ENCODE measurements at regions of chr2 and their contacts with region 1.

Region 1: DNA sequence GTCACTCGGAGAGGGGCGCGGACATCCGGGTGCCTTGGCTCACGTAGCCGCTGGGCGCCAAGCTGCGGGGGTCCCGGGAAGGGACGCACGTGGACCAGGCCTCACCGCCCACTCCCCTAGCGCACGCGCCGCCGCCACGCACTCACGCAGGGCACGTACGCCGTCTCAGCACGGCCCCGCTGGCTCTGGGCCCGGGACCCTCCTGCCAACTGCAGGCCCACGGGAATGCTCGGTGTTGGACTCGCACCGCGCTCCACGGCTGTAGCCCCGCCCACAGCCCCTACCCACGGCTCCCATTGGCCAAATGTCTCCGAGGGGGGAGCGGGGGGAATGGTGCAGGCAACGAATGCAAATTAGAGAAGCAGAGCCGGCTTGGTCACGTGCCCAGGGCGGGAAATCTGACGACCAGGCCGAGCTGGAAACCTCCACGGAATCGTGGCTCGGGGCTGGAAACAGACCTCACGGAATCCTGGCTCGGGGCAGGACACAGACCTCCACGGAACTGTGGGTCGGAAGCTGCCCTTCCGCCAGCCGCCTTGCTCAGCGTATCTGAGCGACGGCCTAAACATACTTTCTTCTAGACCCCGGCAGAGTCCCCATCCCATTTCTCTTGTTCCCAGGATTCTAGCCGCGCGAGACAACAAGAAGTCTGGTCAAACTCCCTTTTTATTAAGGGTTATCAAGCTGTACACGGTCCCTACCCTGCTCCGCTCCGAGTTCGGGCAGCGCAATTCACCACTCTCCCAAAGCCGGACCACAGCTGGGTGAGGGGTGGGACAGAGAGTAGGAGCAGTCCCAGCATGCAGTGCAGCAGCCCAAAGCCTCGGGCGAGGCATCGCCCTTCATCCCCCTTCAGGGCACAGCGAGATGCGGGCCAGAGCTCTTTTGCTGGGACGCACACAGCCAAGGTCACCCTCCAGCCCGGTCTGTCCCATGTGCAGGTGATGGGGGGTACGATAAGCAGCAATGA is at the start of gene ABCB6:
- DNase-seq: peak; percentile 99
- ATAC-seq: peak; percentile 96
- total RNA-seq, gene ABCB6: 32.6 TPM

Region 2: DNA sequence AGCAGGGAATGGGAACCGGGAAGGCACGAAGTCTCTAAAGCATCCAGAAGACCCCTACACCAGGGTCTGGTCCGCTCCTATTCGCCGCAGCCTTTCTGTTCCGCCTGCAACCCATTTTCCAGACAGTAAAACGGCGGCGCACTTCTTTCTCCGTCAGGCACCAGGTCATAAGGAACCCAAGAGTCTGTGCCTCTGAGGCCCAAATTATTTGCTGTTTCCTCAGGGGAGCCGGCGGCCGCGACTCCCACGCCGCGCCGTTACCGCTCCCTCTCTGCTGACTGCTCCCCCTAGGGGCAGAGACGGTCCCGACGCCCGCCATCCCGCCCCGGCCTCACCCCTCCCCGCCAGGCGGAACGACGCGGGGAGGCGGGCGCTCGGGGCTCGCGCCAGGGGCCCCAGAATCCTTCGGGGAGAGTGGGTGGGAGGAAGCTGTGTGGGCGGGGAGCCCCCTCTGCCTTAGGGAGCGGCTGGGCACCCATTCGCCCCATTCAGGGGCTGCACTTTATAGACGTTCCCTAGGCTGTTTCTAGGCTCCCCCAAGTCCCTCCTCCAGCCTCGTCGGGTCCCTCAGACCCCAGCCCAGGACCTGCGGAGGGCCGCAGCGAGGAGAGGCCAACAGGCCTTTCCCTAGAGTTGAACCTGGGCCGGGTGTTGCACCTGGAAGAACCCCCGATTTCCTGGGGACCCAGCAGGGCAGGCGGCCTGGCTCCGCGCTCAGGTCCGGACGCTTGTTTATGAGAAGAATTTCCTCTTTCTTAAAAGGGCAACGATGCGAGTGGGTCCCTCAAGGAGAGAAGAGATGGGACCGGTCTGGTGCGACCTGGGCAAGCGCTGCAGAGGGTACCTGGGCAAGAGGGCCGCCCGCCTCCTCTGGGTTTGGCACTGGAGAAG is 823.0 kb before region 1 on chr2:
- intact Hi-C with region 1: loop called (anchors 5 kb)
- DNase-seq: peak; percentile 96
- ATAC-seq: peak; percentile 83

Region 3: GRCh38 chr2:219177552-219178376 is 41.3 kb before region 1 on chr2 and contains the start of gene RETREG2:
- intact Hi-C with region 1: loop called (anchors 5 kb)
- DNase-seq: peak; percentile 91
- ATAC-seq: peak; percentile 95
- total RNA-seq, gene RETREG2: 75.7 TPM

Measured in sciatic nerve (tissue), 2 donors.